ENCODE measurements at regions of chr9 and their contacts with region 1.

Region 1: GRCh38 chr9:127869310-127870152 is 7.9 kb downstream of the AK1 start:
- DNase-seq: peak; percentile 67
- H3K4me3 ChIP-seq: no peak overlapping the region
- H3K27ac ChIP-seq: no peak overlapping the region
- H3K4me1 ChIP-seq: peaks cover 11% of the 10 kb centered on the region
- H3K27me3 ChIP-seq: no peaks in the 10 kb centered on the region
- CTCF ChIP-seq: peak; percentile 76 to 89

Region 2: DNA sequence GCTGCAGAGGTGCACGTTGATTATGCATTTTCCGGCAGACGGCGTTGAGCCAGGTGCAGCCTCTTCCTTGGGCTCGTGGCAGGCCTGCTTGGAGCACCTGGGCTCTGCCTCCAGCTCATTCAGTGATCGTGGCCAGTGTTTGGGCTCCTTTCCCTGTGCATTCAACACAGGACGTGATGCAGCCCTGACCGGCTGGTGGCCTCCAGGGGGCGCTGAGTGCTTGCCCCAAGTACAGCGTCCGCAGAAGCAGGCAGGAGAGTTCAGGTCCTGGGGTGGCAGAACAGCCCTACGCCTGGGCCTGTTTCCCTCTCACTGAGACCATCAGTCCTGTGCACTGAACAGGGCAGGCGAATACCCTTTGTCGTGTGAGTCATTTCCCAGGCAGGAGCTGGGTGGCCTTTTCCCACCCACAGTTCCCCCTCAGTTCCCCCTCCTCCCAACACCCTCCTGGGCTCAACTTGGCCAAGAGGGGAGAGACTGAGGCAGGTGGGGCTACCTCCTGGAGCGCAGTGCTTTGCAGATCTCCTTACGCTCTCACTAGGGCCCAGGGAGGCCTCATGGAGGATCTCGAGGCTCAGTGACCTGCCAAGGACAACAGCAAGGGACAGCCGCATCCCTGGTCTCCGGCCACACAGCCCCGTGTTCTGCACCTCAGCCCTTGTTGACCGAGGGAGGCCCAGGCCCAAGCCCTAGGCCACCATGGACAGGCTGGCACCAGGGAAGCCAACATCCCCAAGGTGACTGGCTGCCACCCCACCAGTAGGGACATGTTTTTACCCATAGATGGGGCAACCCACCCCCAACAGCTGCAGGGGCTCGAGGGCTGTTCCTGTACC is 365.4 kb before region 1 on chr9:
- CTCF ChIA-PET with region 1: interaction called, 12 read pairs
- dilution Hi-C with region 1: no loop called
- in situ Hi-C with region 1: no loop called
- intact Hi-C with region 1: no loop called
- DNase-seq: peak; percentile 59
- H3K4me3 ChIP-seq: no peak overlapping the region
- H3K27ac ChIP-seq: no peak overlapping the region
- H3K4me1 ChIP-seq: peaks cover 9% of the 10 kb centered on the region
- H3K27me3 ChIP-seq: no peaks in the 10 kb centered on the region
- CTCF ChIP-seq: peak; percentile 77 to 86

Region 3: GRCh38 chr9:127763918-127764384 is 105.6 kb before region 1 on chr9:
- CTCF ChIA-PET with region 1: no interaction called
- dilution Hi-C with region 1: loop called (anchors 5 kb)
- in situ Hi-C with region 1: no loop called
- intact Hi-C with region 1: no loop called
- DNase-seq: no peak
- H3K4me3 ChIP-seq: no peak overlapping the region
- H3K27ac ChIP-seq: no peak overlapping the region
- H3K4me1 ChIP-seq: no peaks in the 10 kb centered on the region
- H3K27me3 ChIP-seq: no peaks in the 10 kb centered on the region
- CTCF ChIP-seq: peak in 1 of 2 donors; percentile 23

Region 4: GRCh38 chr9:127802576-127803443 is 66.7 kb before region 1 on chr9 and contains the start of gene FPGS:
- CTCF ChIA-PET with region 1: interaction called, 3 read pairs
- dilution Hi-C with region 1: loop called (anchors 5 kb)
- in situ Hi-C with region 1: no loop called
- intact Hi-C with region 1: loop called (anchors 5 kb)
- DNase-seq: peak; percentile 82
- H3K4me3 ChIP-seq: peak within 1 kb of the TSS; percentile 72 to 93 (median 77)
- H3K27ac ChIP-seq: peak within 1 kb of the TSS; percentile 98
- H3K4me1 ChIP-seq: peaks cover 25% of the 10 kb centered on the region
- H3K27me3 ChIP-seq: no peaks in the 10 kb centered on the region
- CTCF ChIP-seq: no peak
- total RNA-seq, gene FPGS: 59.5 to 85.8 TPM

Region 5: DNA sequence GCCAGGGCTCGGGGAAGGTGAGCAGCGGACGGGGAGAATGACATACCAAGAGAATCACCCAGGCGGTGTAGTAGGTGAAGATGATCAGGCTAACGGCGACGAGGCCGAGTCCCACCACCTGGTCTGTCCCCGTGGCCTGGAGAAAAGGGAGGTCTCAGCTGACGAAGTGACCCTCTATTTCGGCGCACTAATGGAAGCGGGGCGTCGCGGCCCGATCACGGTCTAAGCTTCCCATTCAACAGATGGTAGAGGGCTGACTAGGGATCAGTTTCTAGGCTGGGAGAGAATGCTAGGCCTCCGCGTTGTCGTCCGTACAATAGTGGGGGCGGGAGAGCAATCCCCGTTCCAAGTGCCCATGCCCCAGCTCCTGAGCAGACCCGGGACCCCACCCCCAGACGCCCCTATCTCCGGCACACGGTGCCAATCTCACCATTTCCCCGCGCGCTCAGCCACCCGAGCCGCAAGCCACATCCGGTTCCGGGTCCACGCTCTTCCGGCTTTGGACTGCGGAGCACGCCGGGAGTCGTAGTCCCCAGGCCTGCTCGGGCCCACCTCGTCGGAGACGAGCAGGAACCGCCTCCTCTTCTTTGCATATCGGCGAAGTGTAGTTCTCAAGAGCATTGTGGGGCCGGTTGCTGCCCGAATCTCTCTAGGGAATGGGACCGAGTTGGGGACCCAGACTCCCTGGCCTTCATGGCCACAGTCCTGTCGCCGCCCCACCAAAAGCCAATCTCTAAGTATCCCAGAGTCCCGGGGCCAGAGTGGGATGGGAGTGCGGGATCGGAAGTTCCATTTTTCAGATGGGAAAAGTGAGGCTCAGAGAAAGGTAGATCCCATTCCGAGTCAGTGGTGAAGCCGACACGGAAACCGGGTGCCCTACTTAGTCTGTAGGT is 68.1 kb after region 1 on chr9 and contains the start of gene DPM2:
- CTCF ChIA-PET with region 1: no interaction called
- dilution Hi-C with region 1: loop called (anchors 5 kb)
- in situ Hi-C with region 1: no loop called
- intact Hi-C with region 1: no loop called
- DNase-seq: peak; percentile 78
- H3K4me3 ChIP-seq: peak within 1 kb of the TSS; percentile 60 to 89 (median 73)
- H3K27ac ChIP-seq: peak within 1 kb of the TSS; percentile 60
- H3K4me1 ChIP-seq: peaks cover 23% of the 10 kb centered on the region
- H3K27me3 ChIP-seq: no peaks in the 10 kb centered on the region
- CTCF ChIP-seq: no peak
- total RNA-seq, gene DPM2: 10.0 to 48.7 TPM

Region 6: GRCh38 chr9:128034821-128035764 is 165.6 kb after region 1 on chr9:
- CTCF ChIA-PET with region 1: no interaction called
- dilution Hi-C with region 1: no loop called
- in situ Hi-C with region 1: no loop called
- intact Hi-C with region 1: loop called (anchors 5 kb)
- DNase-seq: peak; percentile 80
- H3K4me3 ChIP-seq: no peak overlapping the region
- H3K27ac ChIP-seq: no peak overlapping the region
- H3K4me1 ChIP-seq: no peaks in the 10 kb centered on the region
- H3K27me3 ChIP-seq: no peaks in the 10 kb centered on the region
- CTCF ChIP-seq: peak; percentile 73 to 82

Region 7: GRCh38 chr9:128117613-128118471 is 248.3 kb after region 1 on chr9:
- CTCF ChIA-PET with region 1: interaction called, 3 read pairs
- dilution Hi-C with region 1: no loop called
- in situ Hi-C with region 1: no loop called
- intact Hi-C with region 1: loop called (anchors 5 kb)
- DNase-seq: peak; percentile 76
- H3K4me3 ChIP-seq: no peak overlapping the region
- H3K27ac ChIP-seq: no peak overlapping the region
- H3K4me1 ChIP-seq: no peaks in the 10 kb centered on the region
- H3K27me3 ChIP-seq: no peaks in the 10 kb centered on the region
- CTCF ChIP-seq: peak; percentile 100

Measured in mammary epithelial cell (primary cell).